CD4-positive, alpha-beta memory T cell (primary cell): ENCODE measurements at regions of chr10 and their contacts with region 1.

Region 1: DNA sequence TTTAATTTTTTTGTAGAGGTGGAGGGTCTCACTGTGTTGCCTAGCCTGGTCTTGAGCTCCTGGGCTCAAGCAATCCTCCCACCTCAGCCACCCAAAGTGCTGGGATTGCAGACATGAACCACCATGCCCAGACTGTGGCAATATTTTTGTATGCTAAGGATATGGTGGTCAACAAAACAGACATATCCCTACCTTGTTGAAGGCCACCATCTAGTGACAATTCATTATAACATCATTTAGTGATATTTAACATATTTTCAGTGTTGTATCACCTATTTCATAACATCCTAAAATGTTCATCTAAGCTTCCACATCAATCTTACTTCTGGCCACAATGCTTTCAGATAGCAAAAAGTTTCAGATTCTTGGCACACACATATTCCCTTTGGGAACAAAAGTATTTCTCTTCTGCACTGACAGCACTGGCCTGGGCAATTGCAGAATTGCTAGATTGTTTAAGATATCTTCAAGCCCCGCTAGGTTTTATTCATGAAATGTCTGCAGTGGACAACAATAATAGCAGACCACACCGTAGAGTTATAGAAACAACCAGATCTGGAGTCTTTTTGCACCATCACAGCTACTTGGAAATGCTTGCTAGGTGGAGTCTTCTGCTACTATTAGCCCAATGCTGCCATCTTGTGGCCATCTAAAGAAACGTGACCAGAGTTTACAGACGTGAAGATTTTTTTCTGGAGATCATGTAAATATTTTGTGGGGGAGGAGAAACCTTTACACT is 58.4 kb downstream of the DNAJC12 start:
- DNase-seq: peak; percentile 72 to 81 (median 77)
- H3K4me3 ChIP-seq: no peak overlapping the region
- H3K4me3 Mint-ChIP-seq: peak overlapping the region in 1 of 8 donors; percentile 4
- H3K27ac ChIP-seq: no peak overlapping the region
- H3K27ac Mint-ChIP-seq: peak overlapping the region in 2 of 7 donors; percentile 19 to 29
- H3K4me1 ChIP-seq: peaks cover 21% of the 10 kb centered on the region
- H3K4me1 Mint-ChIP-seq: peaks cover 23 to 27% (median 25%) of the 10 kb centered on the region in 4 donors
- H3K27me3 ChIP-seq: no peaks in the 10 kb centered on the region
- H3K27me3 Mint-ChIP-seq: no peaks in the 10 kb centered on the region

Region 2: DNA sequence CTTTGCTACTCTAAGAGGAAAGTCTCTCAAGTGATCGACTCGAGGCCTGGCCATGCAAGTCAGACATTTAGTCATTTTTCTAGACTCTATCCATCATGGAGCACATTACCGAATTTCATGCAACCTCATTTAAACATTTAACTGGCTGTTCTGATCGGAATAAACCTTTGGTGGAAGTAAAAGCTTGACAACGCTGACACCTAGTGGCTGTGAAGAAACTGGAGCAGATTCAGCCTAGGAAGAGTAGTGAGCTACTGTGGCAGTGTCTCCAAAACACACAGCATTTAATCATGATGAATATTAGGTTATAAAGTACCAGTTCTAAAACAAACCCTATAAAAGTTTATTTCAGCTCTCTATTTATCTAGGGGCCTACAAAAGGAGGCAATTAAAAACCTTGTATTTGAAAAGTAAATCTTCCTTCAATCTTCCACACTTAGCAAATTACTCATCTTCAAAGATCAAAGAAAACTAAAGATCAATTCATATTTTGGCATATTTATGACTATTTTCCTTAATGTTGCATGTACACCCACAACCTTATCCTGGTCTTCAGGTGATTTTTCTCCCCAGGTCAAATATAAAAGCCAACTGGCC is 258.6 kb before region 1 on chr10:
- CTCF ChIA-PET with region 1: interaction called, 4 read pairs
- POLR2A ChIA-PET with region 1: no interaction called
- intact Hi-C with region 1: loop called (anchors 1 kb)
- DNase-seq: peak; percentile 40 to 47 (median 44)
- H3K4me3 ChIP-seq: no peak overlapping the region
- H3K4me3 Mint-ChIP-seq: no peak overlapping the region
- H3K27ac ChIP-seq: no peak overlapping the region
- H3K27ac Mint-ChIP-seq: no peak overlapping the region
- H3K4me1 ChIP-seq: no peaks in the 10 kb centered on the region
- H3K4me1 Mint-ChIP-seq: peaks cover 0 to 5% (median under 1%) of the 10 kb centered on the region in 4 donors
- H3K27me3 ChIP-seq: no peaks in the 10 kb centered on the region
- H3K27me3 Mint-ChIP-seq: peaks cover 3 to 7% of the 10 kb centered on the region in 2 donors

Region 3: GRCh38 chr10:67697724-67698131 is 81.9 kb before region 1 on chr10:
- CTCF ChIA-PET with region 1: interaction called, 433 read pairs
- POLR2A ChIA-PET with region 1: interaction called, 29 read pairs
- intact Hi-C with region 1: loop called (anchors 1 kb)
- DNase-seq: peak; percentile 40 to 61 (median 56)
- H3K4me3 ChIP-seq: no peak overlapping the region
- H3K4me3 Mint-ChIP-seq: no peak overlapping the region
- H3K27ac ChIP-seq: no peak overlapping the region
- H3K27ac Mint-ChIP-seq: peak overlapping the region in 1 of 7 donors; percentile 52
- H3K4me1 ChIP-seq: peaks cover 5% of the 10 kb centered on the region
- H3K4me1 Mint-ChIP-seq: peaks cover 2 to 19% (median 13%) of the 10 kb centered on the region in 4 donors
- H3K27me3 ChIP-seq: peaks cover 14% of the 10 kb centered on the region
- H3K27me3 Mint-ChIP-seq: peaks cover 23% of the 10 kb centered on the region in 2 donors

Region 4: DNA sequence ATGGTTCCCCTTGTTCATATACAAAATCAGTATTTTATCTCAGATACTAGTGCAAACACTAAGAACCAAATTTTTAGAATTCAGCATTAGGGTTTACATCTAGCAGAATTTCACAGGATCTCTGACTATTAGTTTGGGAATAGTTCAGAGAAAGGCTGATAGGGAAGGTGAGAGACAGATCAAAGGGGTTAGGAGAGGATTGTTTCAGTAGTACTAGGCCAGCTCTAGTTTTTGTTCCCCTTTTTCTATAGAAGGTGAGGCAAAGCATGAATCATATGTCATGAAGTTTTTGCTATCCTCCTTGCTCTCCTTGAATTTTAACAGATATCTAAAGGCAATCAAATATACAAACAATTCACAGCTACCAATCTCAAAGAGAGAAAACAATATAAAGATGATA is 57.5 kb before region 1 on chr10:
- CTCF ChIA-PET with region 1: interaction called, 14 read pairs
- POLR2A ChIA-PET with region 1: no interaction called
- intact Hi-C with region 1: no loop called
- DNase-seq: no peak
- H3K4me3 ChIP-seq: no peak overlapping the region
- H3K4me3 Mint-ChIP-seq: no peak overlapping the region
- H3K27ac ChIP-seq: no peak overlapping the region
- H3K27ac Mint-ChIP-seq: no peak overlapping the region
- H3K4me1 ChIP-seq: no peaks in the 10 kb centered on the region
- H3K4me1 Mint-ChIP-seq: no peaks in the 10 kb centered on the region
- H3K27me3 ChIP-seq: no peaks in the 10 kb centered on the region
- H3K27me3 Mint-ChIP-seq: peaks cover 0 to 1% of the 10 kb centered on the region in 2 donors

Region 5: GRCh38 chr10:67735430-67735829 is 44.2 kb before region 1 on chr10:
- CTCF ChIA-PET with region 1: no interaction called
- POLR2A ChIA-PET with region 1: no interaction called
- intact Hi-C with region 1: no loop called
- DNase-seq: peak in 4 of 5 donors; percentile 9 to 31 (median 26)
- H3K4me3 ChIP-seq: no peak overlapping the region
- H3K4me3 Mint-ChIP-seq: peak overlapping the region in 3 of 8 donors; percentile 2 to 18 (median 5)
- H3K27ac ChIP-seq: no peak overlapping the region
- H3K27ac Mint-ChIP-seq: no peak overlapping the region
- H3K4me1 ChIP-seq: peaks cover 5% of the 10 kb centered on the region
- H3K4me1 Mint-ChIP-seq: peaks cover 0 to 11% (median 6%) of the 10 kb centered on the region in 4 donors
- H3K27me3 ChIP-seq: no peaks in the 10 kb centered on the region
- H3K27me3 Mint-ChIP-seq: peaks cover 5 to 6% of the 10 kb centered on the region in 2 donors

Region 6: DNA sequence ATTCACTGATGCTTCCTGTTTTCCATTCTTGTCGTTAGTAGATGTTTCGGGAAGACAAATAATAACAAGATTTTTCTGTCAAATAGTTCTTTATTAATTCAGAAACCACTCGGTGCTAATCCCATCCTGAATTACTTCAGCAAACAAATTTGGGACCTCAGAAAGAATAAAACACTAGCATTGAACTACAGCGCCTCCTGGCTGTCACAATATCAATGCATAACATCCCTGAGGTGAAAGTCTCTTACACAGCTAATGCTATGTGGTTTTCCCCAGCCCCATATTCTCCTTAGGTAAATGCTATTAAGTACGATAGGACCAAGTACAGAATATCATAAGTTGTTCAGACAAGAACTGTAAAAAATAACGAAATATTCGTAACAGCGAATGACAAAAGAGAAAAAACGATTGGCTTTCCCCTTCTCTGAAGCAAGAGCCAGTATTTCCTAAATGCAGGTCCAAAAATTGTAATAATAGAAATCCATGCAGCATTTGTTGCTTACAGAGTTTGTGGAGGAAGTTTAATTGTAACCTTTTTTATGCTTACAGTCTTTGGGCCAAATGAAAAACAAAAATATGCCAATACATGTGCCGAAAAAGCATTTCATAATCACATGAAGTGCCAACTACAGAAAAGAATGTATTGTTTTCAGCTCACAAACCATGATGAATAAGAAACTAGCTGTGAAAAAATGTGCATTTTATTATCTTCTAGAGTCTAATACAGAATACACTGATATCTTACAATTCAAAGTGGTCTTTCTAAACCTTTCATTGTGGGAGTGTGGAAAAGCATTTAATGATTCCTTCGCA is 376.9 kb after region 1 on chr10:
- CTCF ChIA-PET with region 1: interaction called, 11 read pairs
- POLR2A ChIA-PET with region 1: no interaction called
- intact Hi-C with region 1: no loop called
- DNase-seq: peak; percentile 51 to 55 (median 53)
- H3K4me3 ChIP-seq: no peak overlapping the region
- H3K4me3 Mint-ChIP-seq: no peak overlapping the region
- H3K27ac ChIP-seq: no peak overlapping the region
- H3K27ac Mint-ChIP-seq: no peak overlapping the region
- H3K4me1 ChIP-seq: no peaks in the 10 kb centered on the region
- H3K4me1 Mint-ChIP-seq: peaks cover 0 to 1% (median 0%) of the 10 kb centered on the region in 4 donors
- H3K27me3 ChIP-seq: no peaks in the 10 kb centered on the region
- H3K27me3 Mint-ChIP-seq: peaks cover 0 to 7% of the 10 kb centered on the region in 2 donors